ENCODE measurements at regions of chr17 and their contacts with region 1.

Region 1: GRCh38 chr17:28865946-28866752 is 11.3 kb downstream of the ERAL1 start:
- DNase-seq: no peak
- H3K4me3 ChIP-seq: no peak overlapping the region
- H3K27ac ChIP-seq: no peak overlapping the region
- H3K4me1 ChIP-seq: no peaks in the 10 kb centered on the region
- H3K27me3 ChIP-seq: no peaks in the 10 kb centered on the region
- CTCF ChIP-seq: no peak

Region 2: DNA sequence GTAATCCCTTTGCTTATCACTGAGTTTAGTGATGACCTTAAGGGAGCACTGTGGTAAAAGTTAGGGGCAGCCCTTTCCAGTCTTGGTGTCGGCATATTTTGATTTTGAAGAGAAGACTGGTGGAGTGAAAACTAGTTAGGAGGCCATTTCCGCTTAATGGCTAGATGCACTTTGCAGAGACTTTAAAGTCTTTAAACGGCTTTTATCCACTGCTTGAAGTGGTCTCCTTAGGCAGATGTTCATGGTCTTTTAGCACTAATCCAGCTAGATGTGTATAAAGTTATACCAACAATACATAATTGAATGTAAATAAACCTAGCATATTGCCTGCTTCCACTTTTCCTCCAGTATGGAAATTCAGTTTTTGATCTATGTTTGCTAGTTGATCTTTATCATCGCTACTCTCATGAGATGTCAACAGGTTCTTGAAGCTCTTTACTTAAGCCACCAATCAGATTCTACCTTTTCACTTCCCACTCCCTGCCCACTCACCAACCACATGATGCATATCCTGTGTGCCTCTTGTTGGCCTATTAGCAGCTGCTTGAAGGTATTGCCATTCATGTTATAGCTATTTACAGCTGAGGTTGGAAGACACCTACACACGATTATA is 691.7 kb before region 1 on chr17:
- CTCF ChIA-PET with region 1: no interaction called
- dilution Hi-C with region 1: no loop called
- in situ Hi-C with region 1: no loop called
- intact Hi-C with region 1: no loop called
- DNase-seq: peak; percentile 29
- H3K4me3 ChIP-seq: no peak overlapping the region
- H3K27ac ChIP-seq: no peak overlapping the region
- H3K4me1 ChIP-seq: no peaks in the 10 kb centered on the region
- H3K27me3 ChIP-seq: no peaks in the 10 kb centered on the region
- CTCF ChIP-seq: no peak

Region 3: DNA sequence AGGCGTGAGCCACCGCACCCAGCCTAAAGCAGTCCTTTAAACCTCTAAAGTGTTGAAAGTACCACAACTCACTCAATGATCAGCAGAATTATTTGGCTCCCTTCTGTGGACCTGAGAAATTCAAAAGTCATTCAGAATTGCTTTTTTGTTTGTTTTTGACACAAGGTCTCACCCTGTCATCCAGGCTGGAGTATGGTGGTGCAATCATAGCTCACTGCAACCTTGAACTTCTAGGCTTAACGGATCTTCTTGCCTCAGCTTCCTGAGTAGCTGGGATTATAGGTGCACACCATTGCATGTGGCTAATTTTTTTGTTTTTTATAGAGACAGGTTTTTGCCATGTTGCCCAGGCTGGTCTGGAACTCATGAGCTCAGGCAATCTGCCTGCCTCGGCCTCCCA is 78.0 kb before region 1 on chr17:
- CTCF ChIA-PET with region 1: no interaction called
- dilution Hi-C with region 1: loop called (anchors 5 kb)
- in situ Hi-C with region 1: no loop called
- intact Hi-C with region 1: no loop called
- DNase-seq: no peak
- H3K4me3 ChIP-seq: no peak overlapping the region
- H3K27ac ChIP-seq: no peak overlapping the region
- H3K4me1 ChIP-seq: no peaks in the 10 kb centered on the region
- H3K27me3 ChIP-seq: no peaks in the 10 kb centered on the region
- CTCF ChIP-seq: no peak

Region 4: GRCh38 chr17:28828294-28829040 is 37.7 kb before region 1 on chr17:
- CTCF ChIA-PET with region 1: no interaction called
- dilution Hi-C with region 1: loop called (anchors 5 kb)
- in situ Hi-C with region 1: no loop called
- intact Hi-C with region 1: no loop called
- DNase-seq: no peak
- H3K4me3 ChIP-seq: no peak overlapping the region
- H3K27ac ChIP-seq: no peak overlapping the region
- H3K4me1 ChIP-seq: no peaks in the 10 kb centered on the region
- H3K27me3 ChIP-seq: no peaks in the 10 kb centered on the region
- CTCF ChIP-seq: no peak

Measured in mammary epithelial cell (primary cell).